ENCODE measurements at regions of chr15 and their contacts with region 1.

Region 1: DNA sequence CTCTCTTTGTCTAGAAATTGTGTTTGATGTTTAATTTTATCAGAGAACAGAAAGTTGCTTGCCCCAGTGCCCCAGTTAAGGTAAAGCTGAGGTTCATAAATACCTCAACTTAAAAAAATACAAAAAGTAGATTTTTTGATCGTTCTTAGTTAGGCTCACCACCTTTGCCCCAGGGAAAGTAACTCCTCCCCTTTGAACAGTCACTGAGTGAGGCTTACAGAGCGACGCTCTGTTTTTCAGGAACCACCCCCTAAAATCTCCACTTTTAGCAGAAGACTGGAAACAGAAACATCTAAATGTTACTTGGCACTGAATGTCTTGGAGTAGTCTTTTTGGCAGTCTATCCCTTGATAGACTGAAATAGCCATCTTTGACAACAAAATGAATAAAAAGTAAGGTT is 24.9 kb downstream of the BLM start:
- DNase-seq: no peak
- H3K4me3 Mint-ChIP-seq: no peak overlapping the region
- H3K27ac Mint-ChIP-seq: no peak overlapping the region
- H3K4me1 Mint-ChIP-seq: peaks cover 67% of the 10 kb centered on the region
- H3K27me3 Mint-ChIP-seq: no peaks in the 10 kb centered on the region

Region 2: DNA sequence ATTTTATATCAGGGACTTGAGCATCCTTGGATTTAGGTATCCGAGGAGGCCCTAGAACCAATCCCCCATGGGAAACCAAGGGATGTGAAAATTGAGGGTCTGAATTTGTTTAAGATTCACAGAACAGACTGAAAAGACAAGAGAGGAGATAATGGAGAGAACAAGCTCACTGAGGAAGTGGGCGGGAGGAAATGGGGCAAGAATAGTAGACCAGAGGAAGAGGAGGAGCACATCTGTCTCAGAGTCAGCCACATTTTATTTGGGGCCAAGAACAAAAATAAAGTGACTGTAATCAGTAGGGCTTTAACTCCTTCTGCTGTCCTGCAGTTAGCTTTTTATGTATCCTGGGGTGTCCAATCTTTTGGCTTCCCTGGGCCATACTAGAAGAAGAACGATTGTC is 38.8 kb after region 1 on chr15:
- intact Hi-C with region 1: loop called (anchors 5 kb)
- DNase-seq: peak; percentile 3
- H3K4me3 Mint-ChIP-seq: peak overlapping the region; percentile 20
- H3K27ac Mint-ChIP-seq: peak overlapping the region; percentile 96
- H3K4me1 Mint-ChIP-seq: peaks cover 36% of the 10 kb centered on the region
- H3K27me3 Mint-ChIP-seq: no peaks in the 10 kb centered on the region

Measured in activated T-helper 1 cell treated with anti-CD3 and anti-CD28 coated beads, Interleukin-12 subunit alpha, Interleukin-12 subunit beta, Interleukin-2, Interleukin-4 antibody, amounts not matched to agents 30 ng/mL and 10 ng/mL and 1 ng/mL, durations not matched to agents 14 hours and 24 hours and 36 hours (primary cell).